ENCODE measurements at regions of chr5 and their contacts with region 1.

Region 1: DNA sequence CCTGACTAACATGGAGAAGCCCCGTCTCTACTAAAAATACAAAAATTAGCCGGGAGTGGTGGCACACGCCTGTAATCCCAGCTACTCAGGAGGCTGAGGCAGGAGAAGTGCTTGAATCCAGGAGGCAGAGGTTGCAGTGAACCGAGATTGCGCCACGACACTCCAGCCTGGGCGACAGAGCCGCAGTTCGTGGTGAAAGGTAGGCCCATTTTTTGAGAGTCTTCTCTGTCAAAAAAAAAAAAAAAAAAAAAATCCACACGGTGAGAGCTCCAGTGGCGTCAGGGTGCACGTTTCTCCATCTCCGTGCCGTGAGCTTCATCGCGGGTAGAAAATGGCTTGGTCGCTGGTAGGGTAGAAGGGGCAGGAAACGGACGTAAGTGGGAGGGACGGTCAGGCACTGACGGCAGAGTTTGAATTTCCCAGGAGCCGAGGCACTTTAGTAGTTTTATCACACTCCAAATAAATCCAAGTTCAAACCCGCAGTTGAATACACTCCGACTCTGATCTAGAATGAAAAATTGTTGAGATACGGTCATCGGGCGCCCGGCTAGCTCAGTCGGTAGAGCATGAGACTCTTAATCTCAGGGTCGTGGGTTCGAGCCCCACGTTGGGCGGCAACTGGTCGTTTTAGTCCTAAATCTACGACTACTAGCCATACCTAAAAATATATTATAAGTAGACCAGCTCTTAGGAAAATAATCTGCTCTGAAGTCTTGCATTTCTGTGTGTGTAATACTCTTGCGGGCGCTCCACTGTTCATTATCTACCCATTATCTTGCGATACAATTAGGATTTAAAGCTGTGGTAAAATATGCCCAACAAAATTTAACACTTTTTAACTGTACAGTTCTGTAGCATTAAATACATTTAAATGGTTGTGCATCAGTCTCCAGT is 2.5 kb upstream of the TRIM7 start:
- DNase-seq: peak; percentile 96
- ATAC-seq: peak; percentile 51
- H3K4me3 ChIP-seq: peak overlapping the region; percentile 85
- H3K27ac ChIP-seq: peak overlapping the region; percentile 69
- H3K4me1 ChIP-seq: peaks cover 18% of the 10 kb centered on the region
- H3K27me3 ChIP-seq: no peaks in the 10 kb centered on the region
- CTCF ChIP-seq: no peak

Region 2: GRCh38 chr5:181191529-181192394 is 15.7 kb before region 1 on chr5:
- CTCF ChIA-PET with region 1: interaction called, 7 read pairs
- POLR2A ChIA-PET with region 1: interaction called, 9 read pairs
- intact Hi-C with region 1: loop called (anchors 1 kb)
- DNase-seq: peak; percentile 96
- ATAC-seq: peak; percentile 55
- H3K4me3 ChIP-seq: peak overlapping the region; percentile 89
- H3K27ac ChIP-seq: peak overlapping the region; percentile 64
- H3K4me1 ChIP-seq: peaks cover 13% of the 10 kb centered on the region
- H3K27me3 ChIP-seq: no peaks in the 10 kb centered on the region
- CTCF ChIP-seq: no peak

Region 3: DNA sequence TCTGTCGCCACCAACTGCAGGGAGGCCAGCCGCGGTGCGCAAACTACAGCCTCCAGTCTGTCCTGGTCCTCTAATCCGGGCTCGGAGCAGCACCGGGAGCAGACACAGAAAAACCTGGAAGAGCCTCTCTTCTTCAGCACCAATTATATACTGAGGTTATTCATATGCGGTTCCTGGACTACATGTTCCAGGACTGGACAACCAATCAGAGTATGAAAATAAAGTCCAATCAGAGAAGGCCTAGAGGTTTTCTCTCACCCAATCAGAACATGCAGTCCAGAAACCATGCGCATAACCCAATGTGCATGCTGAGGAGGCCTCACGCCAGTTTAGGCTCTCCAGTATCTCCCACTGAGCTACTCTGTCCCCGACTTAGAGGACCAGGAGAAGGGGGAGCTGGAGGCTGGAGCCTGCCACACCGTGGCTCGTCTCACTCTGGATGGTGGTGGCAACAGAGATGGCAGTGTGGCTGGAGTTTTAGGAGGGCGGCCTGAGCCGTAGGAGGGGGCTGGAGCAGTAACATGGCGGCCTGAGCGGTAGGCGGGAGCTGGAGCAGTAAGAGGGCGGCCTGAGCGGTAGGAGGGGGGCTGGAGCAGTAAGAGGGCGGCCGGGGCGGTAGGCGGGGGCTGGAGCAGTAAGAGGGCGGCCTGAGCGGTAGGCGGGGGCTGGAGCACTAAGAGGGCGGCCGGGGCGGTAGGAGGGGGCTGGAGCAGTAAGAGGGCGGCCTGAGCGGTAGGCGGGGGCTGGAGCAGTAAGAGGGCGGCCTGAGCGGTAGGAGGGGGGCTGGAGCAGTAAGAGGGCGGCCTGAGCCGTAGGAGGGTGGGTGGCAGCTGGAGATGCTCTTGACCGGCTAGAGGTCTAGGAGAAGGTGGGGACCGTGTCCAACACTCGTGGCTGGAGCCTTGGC is 73.9 kb after region 1 on chr5:
- CTCF ChIA-PET with region 1: no interaction called
- POLR2A ChIA-PET with region 1: no interaction called
- intact Hi-C with region 1: no loop called
- DNase-seq: no peak
- ATAC-seq: no peak
- H3K4me3 ChIP-seq: no peak overlapping the region
- H3K27ac ChIP-seq: no peak overlapping the region
- H3K4me1 ChIP-seq: no peaks in the 10 kb centered on the region
- H3K27me3 ChIP-seq: peaks cover 5% of the 10 kb centered on the region; the same call in 1 of the 2 replicates
- CTCF ChIP-seq: no peak